ENCODE measurements at regions of chr7 and their contacts with region 1.

Region 1: GRCh38 chr7:12067141-12067831 is 143.8 kb upstream of the TMEM106B start:
- DNase-seq: peak; percentile 60 to 78
- H3K4me3 ChIP-seq: no peak overlapping the region
- H3K4me1 ChIP-seq: 0 out of 2 replicates have a peak, but pooled peaks cover 5% of the 10 kb centered on the region
- H3K27me3 ChIP-seq: no peaks in the 10 kb centered on the region

Region 2: GRCh38 chr7:11416641-11417458 is 650.4 kb before region 1 on chr7:
- in situ Hi-C with region 1: loop called (anchors 25 kb)
- DNase-seq: no peak
- H3K4me3 ChIP-seq: no peak overlapping the region
- H3K4me1 ChIP-seq: peaks cover 3% of the 10 kb centered on the region; the same call in 1 of the 2 replicates
- H3K27me3 ChIP-seq: no peaks in the 10 kb centered on the region

Region 3: GRCh38 chr7:11638011-11638774 is 429.1 kb before region 1 on chr7:
- in situ Hi-C with region 1: no loop called
- DNase-seq: no peak
- H3K4me3 ChIP-seq: no peak overlapping the region
- H3K4me1 ChIP-seq: peaks cover 14% of the 10 kb centered on the region
- H3K27me3 ChIP-seq: no peaks in the 10 kb centered on the region

Region 4: DNA sequence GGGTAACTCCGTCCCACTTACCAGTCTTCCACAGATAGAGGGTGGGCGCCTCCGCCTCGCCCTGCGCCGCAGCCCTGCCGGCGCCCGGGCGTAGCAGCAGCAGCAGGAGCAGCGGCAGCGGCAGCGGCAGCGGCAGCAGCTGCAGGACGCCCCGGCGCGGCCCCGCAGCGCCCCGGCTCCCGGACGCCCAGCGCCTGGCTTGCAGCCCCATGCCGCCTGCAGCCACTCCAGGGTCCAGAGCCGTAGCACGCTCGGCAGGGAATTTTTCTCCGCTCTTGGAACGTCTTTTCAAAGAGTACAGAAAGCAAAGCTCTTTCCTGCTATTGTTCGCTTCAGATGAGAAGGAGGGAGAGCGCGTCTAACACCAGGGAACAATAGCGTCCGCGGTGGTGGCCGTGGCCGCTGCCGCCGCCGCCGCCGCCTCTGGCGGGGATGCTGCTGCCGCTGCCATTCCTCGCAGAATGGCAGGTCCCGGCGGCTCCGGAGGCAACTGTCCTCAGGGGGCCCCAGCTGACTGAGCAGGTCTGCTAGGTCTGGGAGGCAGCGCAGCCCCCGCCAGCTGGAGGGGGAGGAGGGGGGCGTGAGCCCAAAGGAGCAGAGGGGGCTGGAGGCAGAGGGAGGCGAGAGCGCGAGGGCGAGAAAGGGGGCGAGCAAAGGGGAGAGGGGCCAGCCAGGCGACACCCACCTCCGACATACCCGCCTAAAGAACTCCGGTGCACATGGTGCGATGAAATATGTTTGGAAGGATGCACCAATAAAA is 235.4 kb before region 1 on chr7 and contains the start of gene THSD7A:
- in situ Hi-C with region 1: loop called (anchors 25 kb)
- DNase-seq: peak; percentile 66 to 72
- H3K4me3 ChIP-seq: peak within 1 kb of the TSS; percentile 44
- H3K4me1 ChIP-seq: peaks cover 19% of the 10 kb centered on the region
- H3K27me3 ChIP-seq: no peaks in the 10 kb centered on the region

Region 5: GRCh38 chr7:12322284-12322902 is 255.1 kb after region 1 on chr7:
- in situ Hi-C with region 1: loop called (anchors 5 kb)
- DNase-seq: peak in 1 of 2 experiments; percentile 16
- H3K4me3 ChIP-seq: no peak overlapping the region
- H3K4me1 ChIP-seq: no peaks in the 10 kb centered on the region
- H3K27me3 ChIP-seq: no peaks in the 10 kb centered on the region

Region 6: GRCh38 chr7:12490117-12490688 is 422.9 kb after region 1 on chr7:
- in situ Hi-C with region 1: loop called (anchors 25 kb)
- DNase-seq: peak in 1 of 2 experiments; percentile 70
- H3K4me3 ChIP-seq: no peak overlapping the region
- H3K4me1 ChIP-seq: no peaks in the 10 kb centered on the region; the same call in none of the 2 replicates
- H3K27me3 ChIP-seq: no peaks in the 10 kb centered on the region

Measured in HAP-1 (cell line).